ENCODE measurements at regions of chr5 and their contacts with region 1.

Region 1: GRCh38 chr5:88690409-88691229 is 192.4 kb downstream of the MEF2C start:
- DNase-seq: peak; percentile 78 to 85 (median 84)
- H3K4me3 ChIP-seq: peak overlapping the region in 4 of 7 experiments; percentile 26 to 54 (median 34)
- H3K27ac ChIP-seq: no peak overlapping the region
- H3K4me1 ChIP-seq: peaks cover 0 to 19% (median 15%) of the 10 kb centered on the region in 4 experiments
- H3K27me3 ChIP-seq: peaks cover 42 to 100% (median 85%) of the 10 kb centered on the region in 5 experiments

Region 2: GRCh38 chr5:88660947-88661805 is 29.4 kb before region 1 on chr5:
- CTCF ChIA-PET with region 1: interaction called, 13 read pairs
- POLR2A ChIA-PET with region 1: no interaction called
- DNase-seq: peak in 2 of 3 donors; percentile 60 to 74
- H3K4me3 ChIP-seq: peak overlapping the region in 5 of 7 experiments; percentile 19 to 63 (median 54)
- H3K27ac ChIP-seq: no peak overlapping the region
- H3K4me1 ChIP-seq: peaks cover 0 to 12% (median 11%) of the 10 kb centered on the region in 4 experiments
- H3K27me3 ChIP-seq: peaks cover 36 to 99% (median 63%) of the 10 kb centered on the region in 5 experiments

Region 3: GRCh38 chr5:88845081-88845697 is 154.6 kb after region 1 on chr5:
- CTCF ChIA-PET with region 1: no interaction called
- POLR2A ChIA-PET with region 1: no interaction called
- DNase-seq: peak in 1 of 3 donors; percentile 28
- H3K4me3 ChIP-seq: no peak overlapping the region
- H3K27ac ChIP-seq: no peak overlapping the region
- H3K4me1 ChIP-seq: peaks cover 2 to 13% (median 7%) of the 10 kb centered on the region in 4 experiments
- H3K27me3 ChIP-seq: no peaks in the 10 kb centered on the region

Measured in common myeloid progenitor, CD34-positive (primary cell).